ENCODE measurements at regions of chr5 and their contacts with region 1.

Region 1: DNA sequence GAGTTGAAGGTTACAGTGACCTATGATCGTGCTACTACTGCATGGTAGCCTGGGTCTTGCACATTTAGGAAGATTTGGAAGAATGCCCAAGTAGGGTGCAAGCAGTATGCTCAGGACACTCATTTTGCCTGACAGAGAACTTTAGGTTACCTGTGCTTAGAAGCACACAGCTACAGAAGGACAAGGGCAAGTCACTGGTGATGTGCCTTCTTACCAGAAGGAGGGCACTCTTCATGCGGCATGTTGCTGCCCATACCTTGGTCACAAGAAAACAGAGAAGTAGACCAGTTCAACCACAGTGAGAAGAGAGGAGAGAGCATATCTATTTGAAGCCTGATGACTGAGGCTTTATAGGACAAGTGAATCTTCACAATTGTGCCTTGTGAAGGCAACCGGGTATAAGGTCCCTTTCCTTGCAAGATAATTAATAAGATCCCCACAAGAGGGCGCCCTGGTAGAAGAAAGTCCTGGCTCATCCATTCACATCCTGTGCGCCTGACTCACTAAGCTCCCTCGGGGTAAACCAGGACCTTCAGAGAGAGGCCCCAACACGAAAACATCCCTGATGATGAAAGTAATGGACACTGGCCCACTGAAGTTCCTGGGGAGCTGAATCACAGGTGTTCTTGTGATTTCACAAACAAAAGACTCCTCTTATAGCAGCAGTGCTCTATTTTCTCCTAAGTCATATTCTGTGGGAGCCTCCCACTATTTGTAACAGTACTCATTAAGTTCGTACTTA is 38.1 kb upstream of the STARD4 start:
- DNase-seq: peak; percentile 88
- H3K4me3 Mint-ChIP-seq: no peak overlapping the region
- H3K27ac Mint-ChIP-seq: no peak overlapping the region
- H3K4me1 Mint-ChIP-seq: peaks cover 9% of the 10 kb centered on the region
- H3K27me3 Mint-ChIP-seq: no peaks in the 10 kb centered on the region
- CTCF ChIP-seq: peak; percentile 45

Region 2: DNA sequence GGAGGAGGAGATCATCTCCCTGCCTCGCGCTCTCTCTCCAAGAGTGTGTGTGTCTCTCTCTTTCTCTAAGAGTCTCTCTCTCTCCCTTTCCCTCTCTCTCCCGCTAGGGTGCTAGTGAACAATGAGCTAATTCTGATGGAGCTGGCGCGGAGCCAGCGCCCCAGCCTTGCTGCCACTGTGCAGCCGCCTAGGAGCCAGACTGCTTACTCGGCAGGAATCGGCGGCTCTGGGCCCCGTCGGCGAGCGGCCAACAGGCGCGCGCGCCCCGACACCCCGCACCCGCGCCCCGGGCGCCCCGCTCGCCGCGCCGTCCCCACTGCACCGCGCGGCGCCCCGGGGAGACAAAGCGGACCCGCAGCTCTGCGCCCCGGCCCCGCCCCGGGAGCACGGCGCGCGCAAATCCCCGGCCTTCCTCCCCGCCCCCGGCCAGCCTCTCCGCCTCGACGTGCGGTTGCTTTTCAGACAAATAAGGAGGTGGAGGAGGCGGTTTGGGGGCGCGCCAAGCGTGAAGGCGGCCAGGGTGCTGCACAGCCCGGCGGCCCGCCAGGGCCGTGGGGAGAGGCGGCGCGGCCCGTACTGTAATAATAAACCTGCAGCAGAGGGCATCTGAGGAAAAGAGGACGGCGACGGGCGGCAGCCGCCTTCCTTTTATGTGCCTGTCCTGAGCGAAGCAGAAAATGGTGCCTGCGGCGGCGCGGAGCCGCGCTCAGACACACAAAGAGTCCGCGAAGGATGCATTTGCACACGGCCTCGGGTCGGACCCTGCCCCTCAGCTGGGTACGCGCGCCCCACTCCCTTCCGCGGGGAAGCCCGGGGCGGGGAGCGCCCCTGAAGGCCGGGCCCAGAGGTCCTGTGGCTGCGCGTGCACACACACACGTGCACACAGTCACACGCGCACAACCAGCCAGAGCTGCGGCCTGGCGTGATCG is 207.2 kb after region 1 on chr5:
- CTCF ChIA-PET with region 1: interaction called, 3 read pairs
- intact Hi-C with region 1: loop called (anchors 2 kb)
- DNase-seq: peak; percentile 93
- H3K4me3 Mint-ChIP-seq: peak overlapping the region; percentile 60
- H3K27ac Mint-ChIP-seq: peak overlapping the region; percentile 72
- H3K4me1 Mint-ChIP-seq: peaks cover 8% of the 10 kb centered on the region
- H3K27me3 Mint-ChIP-seq: no peaks in the 10 kb centered on the region
- CTCF ChIP-seq: peak; percentile 38

Region 3: DNA sequence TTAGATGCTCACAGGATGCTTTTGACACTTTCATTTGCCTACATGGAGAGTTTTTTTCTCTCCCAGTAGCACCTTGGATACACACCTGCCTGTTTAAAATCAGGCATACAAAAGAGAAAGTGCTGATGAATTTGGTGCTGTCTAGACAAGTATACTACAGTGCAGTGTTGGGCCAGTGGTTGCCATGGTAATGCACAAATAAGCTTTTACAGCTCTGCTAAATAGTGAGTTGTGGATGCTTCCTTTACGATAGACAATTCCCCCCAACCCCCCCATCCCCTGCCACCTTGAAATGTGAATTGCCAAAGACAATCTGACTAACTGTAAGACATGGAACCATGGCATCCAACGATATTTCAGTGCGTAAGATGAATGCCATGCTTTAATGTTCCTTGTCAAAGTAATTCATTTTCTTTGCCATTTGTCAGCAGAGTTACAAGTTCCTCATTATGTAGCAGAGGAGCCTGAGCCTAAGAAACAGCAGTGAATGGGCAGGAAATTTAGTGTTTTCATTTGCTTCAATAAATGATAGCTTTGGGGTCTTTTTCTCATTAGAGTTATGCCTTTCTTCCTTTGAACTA is 298.0 kb after region 1 on chr5:
- CTCF ChIA-PET with region 1: no interaction called
- intact Hi-C with region 1: loop called (anchors 10 kb)
- DNase-seq: no peak
- H3K4me3 Mint-ChIP-seq: no peak overlapping the region
- H3K27ac Mint-ChIP-seq: no peak overlapping the region
- H3K4me1 Mint-ChIP-seq: no peaks in the 10 kb centered on the region
- H3K27me3 Mint-ChIP-seq: no peaks in the 10 kb centered on the region
- CTCF ChIP-seq: no peak

Measured in Calu3 (cell line).